Right ventricle myocardium superior (tissue), 1 donor: ENCODE measurements at regions of chr4 and their contacts with region 1.

Region 1: DNA sequence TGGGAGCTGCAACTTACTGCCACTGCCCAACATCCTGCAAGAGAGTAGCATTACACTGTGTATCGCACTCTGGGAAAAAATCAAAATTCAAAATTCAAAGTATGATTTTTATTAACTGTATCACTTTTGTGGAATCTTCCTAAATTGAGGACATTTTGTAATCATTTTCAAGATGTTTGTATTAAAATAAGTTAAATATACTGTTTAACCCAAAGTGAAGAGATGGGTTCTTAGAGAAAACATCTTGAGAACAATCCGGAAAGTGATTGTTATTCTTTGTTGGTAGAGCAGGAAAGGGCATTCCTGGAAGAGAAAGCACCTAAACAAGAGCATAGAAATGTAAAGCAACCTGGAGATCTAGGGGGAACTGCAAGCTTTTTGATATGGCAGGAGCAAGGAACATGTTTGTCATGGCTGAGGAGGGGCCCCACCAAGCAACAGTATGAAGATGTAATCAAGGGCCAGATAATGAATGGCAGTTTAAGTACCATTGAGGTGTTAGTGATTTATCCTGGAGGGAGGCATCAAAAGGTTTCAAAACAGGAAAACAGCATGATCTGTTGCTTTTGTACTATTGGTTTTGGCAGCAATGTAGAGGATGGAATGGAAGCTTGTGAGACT is 14.1 kb upstream of the SEC24D start:
- DNase-seq: no peak
- ATAC-seq: no peak

Region 2: DNA sequence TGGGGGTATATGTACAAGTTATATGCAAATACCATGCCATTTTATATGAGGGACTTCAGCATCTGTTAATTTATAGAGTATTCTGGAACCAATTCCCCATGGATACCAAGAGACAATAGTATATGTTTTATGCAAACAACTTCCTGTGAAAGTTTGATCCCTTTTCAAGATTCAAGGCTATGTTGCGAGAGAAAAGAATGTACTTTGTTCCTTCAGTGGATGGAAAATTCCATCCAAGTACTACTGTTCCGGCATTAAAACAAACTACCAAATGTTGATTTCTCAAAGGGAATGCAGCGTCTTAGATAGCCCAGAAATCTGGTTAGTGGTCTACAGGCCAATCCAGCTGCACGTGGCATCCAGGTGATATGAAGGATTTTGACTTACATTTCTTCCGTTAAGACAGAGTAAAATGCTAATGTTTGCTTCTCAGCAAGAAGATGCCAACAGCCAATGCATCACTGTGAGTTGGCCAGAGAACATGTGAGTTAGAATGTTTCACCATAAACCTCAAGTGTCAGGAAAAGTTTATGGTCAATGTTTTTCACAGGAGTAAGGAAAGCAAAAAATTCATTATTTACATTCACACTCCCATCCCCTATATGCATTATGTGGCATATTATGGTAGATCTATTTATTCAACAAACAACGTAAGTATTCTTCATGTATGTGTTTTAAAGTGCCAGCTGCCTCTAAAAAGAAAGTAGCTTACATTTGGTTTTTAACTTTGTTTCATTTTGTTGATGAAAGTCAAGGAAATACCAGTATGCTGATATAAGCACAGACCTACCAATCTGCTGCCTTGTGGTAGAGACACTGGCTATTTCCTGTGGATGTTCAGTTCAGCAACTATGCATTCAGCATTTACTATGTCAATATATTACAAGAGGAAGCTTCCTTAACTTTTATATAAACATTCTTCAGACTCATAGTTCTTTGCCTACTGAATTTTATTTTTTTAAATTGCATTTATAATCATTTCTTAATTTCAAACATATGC is 120.4 kb before region 1 on chr4:
- intact Hi-C with region 1: no loop called
- DNase-seq: no peak
- ATAC-seq: no peak

Region 3: GRCh38 chr4:118783887-118784286 is 66.1 kb before region 1 on chr4:
- intact Hi-C with region 1: loop called (anchors 10 kb)
- DNase-seq: no peak
- ATAC-seq: peak; percentile 36

Region 4: GRCh38 chr4:118964891-118965411 is 115.0 kb after region 1 on chr4:
- intact Hi-C with region 1: no loop called
- DNase-seq: no peak
- ATAC-seq: no peak